AG04450 (cell line): ENCODE measurements at regions of chr7 and their contacts with region 1.

Region 1: DNA sequence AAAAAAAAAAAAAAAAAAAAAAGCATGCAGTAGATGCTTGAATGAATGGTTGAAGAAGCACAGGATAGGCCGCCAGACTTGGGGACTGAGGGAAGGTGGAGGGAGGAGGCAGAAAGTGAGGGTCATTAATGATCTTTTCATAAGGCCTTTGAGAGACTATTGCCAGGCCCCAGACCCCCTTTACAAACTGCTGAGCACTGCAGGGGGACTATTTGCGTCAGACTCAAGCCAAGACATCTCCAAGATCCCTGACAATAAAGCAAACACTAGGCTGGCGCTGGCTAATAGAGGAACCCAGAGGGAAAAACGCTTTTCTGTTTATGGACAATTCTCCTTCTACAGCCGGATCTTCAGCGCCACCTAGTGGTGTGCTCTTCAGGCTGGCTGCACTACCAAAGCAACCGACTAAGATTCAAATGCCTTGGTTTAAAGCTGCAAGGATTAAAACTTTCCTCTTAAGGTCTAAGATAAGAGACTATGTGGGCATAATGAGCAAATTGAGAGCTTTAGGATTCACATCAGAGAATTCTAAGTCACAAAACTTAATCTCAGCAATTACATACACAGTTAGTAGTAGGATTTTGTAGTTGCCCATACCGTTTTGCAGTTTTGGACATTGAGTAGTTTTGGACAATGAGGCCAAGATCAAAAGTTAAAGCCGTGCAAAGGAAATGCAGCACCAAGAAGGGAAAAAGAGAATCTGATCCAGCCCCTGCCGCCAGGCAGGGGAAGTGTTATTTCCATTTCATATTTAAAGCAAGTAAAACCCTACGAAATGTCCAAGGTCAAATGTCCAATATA is 17.9 kb upstream of the AGK start:
- DNase-seq: peak; percentile 55
- H3K4me3 ChIP-seq: no peak overlapping the region
- H3K27ac ChIP-seq: no peak overlapping the region
- H3K27me3 ChIP-seq: no peaks in the 10 kb centered on the region
- CTCF ChIP-seq: peak; percentile 99

Region 2: DNA sequence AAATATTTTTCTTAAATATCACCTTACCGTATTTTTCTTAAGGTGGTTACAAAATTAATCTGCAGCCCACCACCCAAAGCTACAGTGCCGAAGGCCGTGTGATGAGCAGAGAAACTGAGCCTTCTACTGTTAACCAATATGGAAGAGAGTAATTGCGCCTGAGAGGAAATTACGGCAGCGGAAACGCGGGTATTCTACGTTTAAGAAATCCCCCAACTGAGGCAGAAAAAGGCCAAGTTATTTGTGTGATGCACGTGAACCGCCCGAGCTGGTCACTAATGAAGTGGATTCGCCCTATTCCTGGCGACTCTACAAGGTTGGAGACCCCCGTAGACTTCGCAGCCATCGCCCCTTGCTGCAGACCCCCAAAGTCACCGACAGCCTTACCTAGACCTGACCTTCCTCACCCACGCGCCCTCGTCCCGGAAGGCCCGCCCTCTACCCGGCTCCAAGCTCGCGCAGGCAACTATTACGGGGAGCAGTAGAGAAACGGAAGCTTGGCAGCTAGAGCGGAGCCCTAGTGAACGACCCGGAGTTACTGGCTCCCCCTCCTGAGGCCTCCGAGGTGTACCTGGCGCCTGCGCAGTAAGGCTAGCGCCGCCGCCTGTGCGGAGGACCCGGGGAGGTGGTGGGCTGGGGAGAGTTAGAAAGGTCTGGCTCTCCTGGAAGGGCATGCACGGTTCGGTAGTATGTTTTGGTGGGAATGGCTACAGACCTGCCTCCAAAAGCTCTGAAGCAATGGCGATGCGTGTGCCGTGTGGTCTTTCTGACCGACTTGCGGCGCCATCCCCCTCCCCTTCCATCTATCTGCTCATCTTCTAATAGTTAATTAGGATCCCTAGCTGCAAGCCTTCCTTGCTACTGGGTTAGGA is 518.6 kb before region 1 on chr7 and contains the start of gene MRPS33:
- CTCF ChIA-PET with region 1: interaction called, 10 read pairs
- POLR2A ChIA-PET with region 1: no interaction called
- DNase-seq: peak; percentile 90
- H3K4me3 ChIP-seq: peak within 1 kb of the TSS; percentile 88
- H3K27ac ChIP-seq: peak within 1 kb of the TSS; percentile 77
- H3K27me3 ChIP-seq: no peaks in the 10 kb centered on the region
- CTCF ChIP-seq: peak; percentile 35
- polyA plus RNA-seq, gene MRPS33: 80.1 and 99.2 TPM in 2 replicates

Region 3: GRCh38 chr7:141511676-141512396 is 21.5 kb before region 1 on chr7:
- CTCF ChIA-PET with region 1: interaction called, 16 read pairs
- POLR2A ChIA-PET with region 1: no interaction called
- DNase-seq: no peak
- H3K4me3 ChIP-seq: no peak overlapping the region
- H3K27ac ChIP-seq: no peak overlapping the region
- H3K27me3 ChIP-seq: peaks cover 10% of the 10 kb centered on the region
- CTCF ChIP-seq: no peak

Region 4: DNA sequence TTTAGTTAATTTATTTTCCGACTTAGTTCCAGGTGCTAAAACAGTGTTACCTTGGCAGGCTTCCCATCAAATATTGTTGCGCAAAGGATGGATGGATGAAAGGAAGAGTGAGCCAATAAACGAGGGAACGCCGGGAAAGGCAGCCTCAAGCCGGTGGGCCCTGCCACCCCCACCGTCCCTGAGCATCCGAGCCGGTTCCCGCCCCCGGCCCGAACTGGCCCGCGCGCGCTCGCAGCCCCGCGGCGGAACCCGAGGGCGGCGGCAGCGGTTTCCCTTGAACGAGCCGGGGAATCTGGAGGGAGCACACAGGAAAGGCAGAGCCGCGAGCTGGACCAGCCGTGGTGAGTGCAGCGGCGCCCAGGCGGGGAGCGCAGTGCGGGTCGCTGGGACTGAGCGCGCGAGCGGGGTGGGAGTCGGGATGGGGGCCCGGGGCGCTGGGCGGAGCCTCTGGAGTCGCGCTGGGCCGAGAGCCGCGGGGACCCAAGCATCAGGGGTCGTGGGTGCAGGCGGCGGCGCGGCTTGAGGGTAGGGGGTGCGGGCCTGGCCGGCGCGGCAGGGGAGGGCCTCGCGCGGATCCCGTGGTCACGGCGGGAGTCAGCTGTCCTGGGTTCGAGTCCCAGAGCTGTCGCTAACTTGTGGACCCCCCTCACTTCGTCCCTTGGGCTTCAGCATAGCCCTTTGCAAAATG is 17.9 kb after region 1 on chr7 and contains the start of gene AGK:
- CTCF ChIA-PET with region 1: interaction called, 53 read pairs
- POLR2A ChIA-PET with region 1: interaction called, 3 read pairs
- DNase-seq: peak; percentile 36
- H3K4me3 ChIP-seq: peak within 1 kb of the TSS; percentile 92
- H3K27ac ChIP-seq: peak within 1 kb of the TSS; percentile 61
- H3K27me3 ChIP-seq: no peaks in the 10 kb centered on the region
- CTCF ChIP-seq: no peak
- polyA plus RNA-seq, gene AGK: 39.0 and 42.5 TPM in 2 replicates

Region 5: GRCh38 chr7:141593134-141593533 is 59.8 kb after region 1 on chr7:
- CTCF ChIA-PET with region 1: interaction called, 25 read pairs
- POLR2A ChIA-PET with region 1: no interaction called
- DNase-seq: peak; percentile 74
- H3K4me3 ChIP-seq: no peak overlapping the region
- H3K27ac ChIP-seq: no peak overlapping the region
- H3K27me3 ChIP-seq: no peaks in the 10 kb centered on the region
- CTCF ChIP-seq: no peak

Region 6: GRCh38 chr7:141754939-141755338 is 221.6 kb after region 1 on chr7:
- CTCF ChIA-PET with region 1: no interaction called
- POLR2A ChIA-PET with region 1: no interaction called
- DNase-seq: no peak
- H3K4me3 ChIP-seq: no peak overlapping the region
- H3K27ac ChIP-seq: no peak overlapping the region
- H3K27me3 ChIP-seq: no peaks in the 10 kb centered on the region
- CTCF ChIP-seq: peak; percentile 40